Activated T-helper 2 cell treated with anti-CD3 and anti-CD28 coated beads, Interferon-gamma antibody, Interleukin-2, Interleukin-4, amounts not matched to agents 10 μg/mL and 5 μg/mL and 100 μg/mL, durations not matched to agents 14 hours and 24 hours and 36 hours (primary cell): ENCODE measurements at regions of chr17 and their contacts with region 1.

Region 1: GRCh38 chr17:58006924-58007780 is at the start of gene SRSF1:
- DNase-seq: peak; percentile 97
- H3K4me3 Mint-ChIP-seq: peak within 1 kb of the TSS; percentile 94
- H3K27ac Mint-ChIP-seq: peak within 1 kb of the TSS; percentile 99
- H3K4me1 Mint-ChIP-seq: peaks cover 42% of the 10 kb centered on the region
- H3K27me3 Mint-ChIP-seq: no peaks in the 10 kb centered on the region
- total RNA-seq, gene SRSF1: 448 and 450 TPM in 2 replicates

Region 2: DNA sequence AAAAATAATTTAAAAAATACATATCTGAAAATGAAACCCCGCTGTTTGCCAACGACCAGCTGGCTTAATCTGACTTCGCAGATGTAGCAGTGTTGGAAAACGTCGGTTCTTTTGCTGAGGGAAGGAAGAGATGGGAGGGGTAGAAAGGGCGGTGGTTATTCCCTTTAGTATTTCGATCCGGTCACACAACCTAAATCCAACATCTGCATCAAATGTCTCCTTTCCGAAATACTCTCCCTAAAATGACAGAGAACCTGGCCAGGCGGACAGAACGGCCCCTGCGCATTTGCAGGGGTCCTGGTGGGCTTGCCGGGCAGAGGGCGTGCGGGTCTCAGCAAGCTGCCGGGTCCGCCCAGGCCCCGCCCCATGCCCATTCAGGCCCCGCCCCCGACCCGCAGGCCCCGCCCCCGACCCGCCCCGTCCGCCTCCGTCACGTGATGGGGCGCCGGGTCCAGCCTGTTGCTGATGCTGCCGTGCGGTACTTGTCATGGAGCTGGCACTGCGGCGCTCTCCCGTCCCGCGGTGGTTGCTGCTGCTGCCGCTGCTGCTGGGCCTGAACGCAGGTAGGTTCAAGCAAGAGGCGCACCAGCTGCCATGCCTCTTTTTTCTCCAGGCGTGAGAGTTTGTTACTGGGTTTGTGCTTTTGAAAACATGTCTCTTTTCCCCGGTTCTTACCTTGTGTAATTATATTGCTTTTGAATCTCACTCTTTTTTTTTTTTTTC is 1029.3 kb before region 1 on chr17 and contains the start of gene SCPEP1:
- intact Hi-C with region 1: loop called (anchors 5 kb)
- DNase-seq: peak; percentile 75
- H3K4me3 Mint-ChIP-seq: peak within 1 kb of the TSS; percentile 81
- H3K27ac Mint-ChIP-seq: peak within 1 kb of the TSS; percentile 79
- H3K4me1 Mint-ChIP-seq: peaks cover 21% of the 10 kb centered on the region
- H3K27me3 Mint-ChIP-seq: peaks cover 18% of the 10 kb centered on the region
- total RNA-seq, gene SCPEP1: 15.8 and 18.1 TPM in 2 replicates

Region 3: GRCh38 chr17:57084802-57085447 is 922.2 kb before region 1 on chr17 and contains the start of gene AKAP1:
- intact Hi-C with region 1: loop called (anchors 2 kb)
- DNase-seq: peak; percentile 95
- H3K4me3 Mint-ChIP-seq: peak within 1 kb of the TSS; percentile 86
- H3K27ac Mint-ChIP-seq: peak within 1 kb of the TSS; percentile 87
- H3K4me1 Mint-ChIP-seq: peaks cover 41% of the 10 kb centered on the region
- H3K27me3 Mint-ChIP-seq: peaks cover 11% of the 10 kb centered on the region
- total RNA-seq, gene AKAP1: 38.7 and 45.0 TPM in 2 replicates

Region 4: DNA sequence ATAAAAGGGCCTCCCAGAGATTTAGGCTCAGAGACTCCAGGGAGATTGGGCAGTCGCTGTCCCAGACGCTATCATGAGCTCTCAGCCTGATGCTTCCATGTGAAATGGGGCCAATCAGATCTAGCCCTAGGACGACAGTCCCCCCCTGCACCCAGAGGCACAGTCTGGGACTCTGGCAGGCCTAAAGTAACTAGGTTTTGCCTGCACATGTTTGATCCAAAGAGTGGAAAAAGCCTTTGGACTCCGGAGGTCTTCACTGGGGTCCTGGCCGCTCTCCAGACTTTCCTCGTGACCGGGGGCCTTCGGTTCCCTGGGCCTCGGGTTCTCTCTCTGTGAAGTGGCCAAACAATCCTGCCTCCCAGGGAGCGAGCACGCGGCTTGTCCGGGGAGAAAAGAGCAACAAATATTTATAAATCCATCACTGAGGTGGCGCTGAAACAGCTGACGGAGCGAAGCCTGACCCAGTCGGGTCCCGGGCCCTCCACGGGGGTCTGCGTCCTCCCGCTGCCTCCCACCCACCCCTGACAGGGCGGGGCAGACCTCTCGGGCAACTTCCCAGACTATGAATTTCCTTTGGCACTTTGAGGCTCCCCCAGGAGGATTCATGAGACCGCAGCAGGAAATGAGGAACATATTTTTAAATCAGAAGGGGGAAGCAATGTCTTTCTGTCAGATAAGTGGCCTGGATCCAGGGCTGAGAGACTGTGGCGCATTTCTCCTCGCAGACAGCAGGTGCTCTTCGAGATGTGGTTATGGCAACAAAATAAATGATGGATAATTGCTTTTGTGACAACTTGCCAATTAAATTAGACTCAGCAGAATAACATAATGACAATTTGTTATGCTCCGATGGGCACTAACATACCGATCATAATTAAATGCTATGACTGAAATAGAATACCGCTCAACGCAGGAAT is 196.2 kb before region 1 on chr17:
- intact Hi-C with region 1: no loop called
- DNase-seq: no peak
- H3K4me3 Mint-ChIP-seq: no peak overlapping the region
- H3K27ac Mint-ChIP-seq: no peak overlapping the region
- H3K4me1 Mint-ChIP-seq: peaks cover 4% of the 10 kb centered on the region
- H3K27me3 Mint-ChIP-seq: peaks cover 56% of the 10 kb centered on the region

Region 5: DNA sequence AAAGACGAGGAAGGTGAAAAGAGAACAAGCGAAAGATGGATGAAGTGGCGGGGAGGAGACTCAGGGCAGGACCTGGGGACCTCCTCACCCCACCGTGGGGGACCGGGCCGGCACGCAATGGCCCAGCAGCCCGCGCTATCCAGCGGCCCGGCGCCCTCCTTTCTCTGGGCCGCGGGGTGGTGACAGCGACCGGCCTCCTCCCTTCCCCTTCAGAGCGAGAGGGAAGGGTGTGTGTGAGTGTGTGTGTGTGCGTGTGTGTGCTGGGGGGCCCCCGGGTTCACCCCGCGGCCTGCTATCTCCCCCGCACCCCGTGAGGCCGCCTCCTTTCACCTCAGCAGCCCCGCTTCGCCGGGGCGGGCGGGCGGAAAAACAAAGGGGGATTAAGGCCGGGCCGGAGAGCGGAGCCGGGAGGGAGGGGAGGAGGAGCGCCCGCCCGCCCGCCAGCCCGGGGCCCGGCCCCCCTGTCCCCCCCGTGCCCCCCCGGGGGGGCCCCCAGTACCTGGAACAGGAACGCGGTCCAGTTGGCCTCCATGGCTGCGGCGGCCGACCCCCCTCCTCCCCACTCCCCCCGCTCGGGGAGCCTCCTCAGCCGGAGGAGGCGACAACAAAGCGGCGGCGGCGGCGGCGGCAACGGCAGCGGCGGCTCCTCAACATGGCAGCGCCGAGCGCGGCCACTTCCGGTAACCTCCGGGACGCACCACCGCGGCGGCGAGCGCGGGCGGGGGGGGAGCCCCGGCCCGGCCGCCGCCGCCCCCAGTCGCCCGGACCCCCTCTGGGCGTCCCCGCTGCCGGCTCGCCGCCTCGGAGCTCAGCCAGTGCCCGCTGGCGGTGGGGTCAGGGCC is 19.4 kb before region 1 on chr17 and contains the start of gene VEZF1:
- intact Hi-C with region 1: loop called (anchors 1 kb)
- DNase-seq: peak; percentile 76
- H3K4me3 Mint-ChIP-seq: peak within 1 kb of the TSS; percentile 91
- H3K27ac Mint-ChIP-seq: peak within 1 kb of the TSS; percentile 91
- H3K4me1 Mint-ChIP-seq: peaks cover 49% of the 10 kb centered on the region
- H3K27me3 Mint-ChIP-seq: no peaks in the 10 kb centered on the region
- total RNA-seq, gene VEZF1: 37.1 and 38.7 TPM in 2 replicates

Region 6: DNA sequence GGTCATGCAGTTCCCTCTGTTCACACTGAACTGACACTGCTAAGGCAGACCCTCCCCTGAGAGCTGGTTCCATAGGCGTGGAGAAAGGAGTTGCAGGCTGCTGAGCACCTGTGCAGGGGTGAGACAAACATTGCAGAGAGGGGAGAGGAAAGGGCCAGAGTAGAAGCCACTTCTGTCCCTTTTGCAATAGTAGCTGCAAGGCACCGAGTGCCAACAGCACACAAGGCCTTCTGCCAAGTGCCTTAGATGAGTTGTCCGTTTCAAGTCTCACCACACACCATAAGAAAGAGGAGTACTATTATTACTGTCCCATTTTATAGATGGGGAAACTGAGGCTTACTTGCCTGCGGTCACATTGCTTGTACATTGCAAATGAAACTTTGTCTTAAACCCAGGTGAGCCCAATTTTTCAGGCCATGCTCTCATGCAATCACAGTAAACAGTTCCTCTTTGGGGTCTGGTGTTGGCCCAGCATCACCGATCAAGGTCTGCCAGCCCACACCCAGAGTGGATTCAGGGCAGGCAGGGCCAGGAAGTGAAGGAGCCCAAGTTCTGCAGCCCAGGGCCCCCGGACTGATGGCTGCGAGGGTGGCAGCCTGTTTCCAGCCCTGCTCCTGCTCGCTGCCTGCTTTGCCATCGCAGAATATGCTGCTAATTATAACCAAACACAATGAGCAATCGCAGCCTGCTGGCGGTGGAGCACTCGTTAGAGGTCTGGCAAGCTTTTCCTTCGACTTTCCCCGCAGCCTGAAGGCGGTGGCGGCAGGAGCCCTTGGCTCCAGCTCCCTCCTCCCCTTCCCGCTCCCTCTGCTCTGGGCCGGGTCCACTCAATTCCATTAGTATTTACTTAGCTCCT is 39.3 kb after region 1 on chr17:
- intact Hi-C with region 1: no loop called
- DNase-seq: no peak
- H3K4me3 Mint-ChIP-seq: no peak overlapping the region
- H3K27ac Mint-ChIP-seq: no peak overlapping the region
- H3K4me1 Mint-ChIP-seq: no peaks in the 10 kb centered on the region
- H3K27me3 Mint-ChIP-seq: peaks cover 20% of the 10 kb centered on the region

Region 7: GRCh38 chr17:58083491-58084316 is 76.6 kb after region 1 on chr17:
- intact Hi-C with region 1: loop called (anchors 1 kb)
- DNase-seq: peak; percentile 60
- H3K4me3 Mint-ChIP-seq: peak overlapping the region; percentile 85
- H3K27ac Mint-ChIP-seq: peak overlapping the region; percentile 59
- H3K4me1 Mint-ChIP-seq: peaks cover 25% of the 10 kb centered on the region
- H3K27me3 Mint-ChIP-seq: peaks cover 20% of the 10 kb centered on the region

Region 8: GRCh38 chr17:58337600-58338453 is 330.7 kb after region 1 on chr17:
- intact Hi-C with region 1: loop called (anchors 10 kb)
- DNase-seq: peak; percentile 93
- H3K4me3 Mint-ChIP-seq: peak overlapping the region; percentile 99
- H3K27ac Mint-ChIP-seq: peak overlapping the region; percentile 99
- H3K4me1 Mint-ChIP-seq: peaks cover 35% of the 10 kb centered on the region
- H3K27me3 Mint-ChIP-seq: no peaks in the 10 kb centered on the region